MCF 10A (cell line): ENCODE measurements at regions of chr17 and their contacts with region 1.

Region 1: DNA sequence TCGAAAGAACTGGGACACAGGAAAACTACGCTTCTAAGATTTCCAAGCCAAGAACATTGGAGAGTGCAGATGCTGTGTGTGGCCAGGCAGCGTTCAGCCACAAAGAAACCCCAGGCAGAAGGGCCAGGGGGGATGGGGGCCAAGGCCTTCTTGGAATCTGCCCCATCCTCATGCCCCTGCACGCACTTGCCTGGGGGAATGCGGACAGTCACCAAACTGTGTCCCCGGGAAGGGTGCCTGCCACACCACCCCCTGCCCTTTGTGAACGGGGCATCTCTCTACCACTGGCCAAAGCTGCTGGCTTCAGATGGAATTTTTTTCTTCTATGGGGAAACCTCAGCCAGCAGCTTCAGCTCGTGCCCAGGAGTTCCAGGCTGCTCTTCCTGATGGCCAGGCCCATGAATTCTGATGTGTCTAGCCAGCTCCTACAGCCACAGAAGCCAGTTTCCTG is 32.0 kb upstream of the DNAH17 start:
- DNase-seq: no peak
- H3K4me3 Mint-ChIP-seq: no peak overlapping the region
- H3K27ac Mint-ChIP-seq: no peak overlapping the region
- H3K4me1 Mint-ChIP-seq: no peaks in the 10 kb centered on the region
- H3K27me3 Mint-ChIP-seq: no peaks in the 10 kb centered on the region
- CTCF ChIP-seq: no peak

Region 2: GRCh38 chr17:78497115-78497540 is 112.1 kb before region 1 on chr17:
- CTCF ChIA-PET with region 1: interaction called, 3 read pairs
- POLR2A ChIA-PET with region 1: no interaction called
- intact Hi-C with region 1: loop called (anchors 1 kb)
- DNase-seq: peak; percentile 84
- H3K4me3 Mint-ChIP-seq: no peak overlapping the region
- H3K27ac Mint-ChIP-seq: no peak overlapping the region
- H3K4me1 Mint-ChIP-seq: no peaks in the 10 kb centered on the region
- H3K27me3 Mint-ChIP-seq: no peaks in the 10 kb centered on the region
- CTCF ChIP-seq: peak; percentile 73